ENCODE measurements at regions of chr12 and their contacts with region 1.

Region 1: DNA sequence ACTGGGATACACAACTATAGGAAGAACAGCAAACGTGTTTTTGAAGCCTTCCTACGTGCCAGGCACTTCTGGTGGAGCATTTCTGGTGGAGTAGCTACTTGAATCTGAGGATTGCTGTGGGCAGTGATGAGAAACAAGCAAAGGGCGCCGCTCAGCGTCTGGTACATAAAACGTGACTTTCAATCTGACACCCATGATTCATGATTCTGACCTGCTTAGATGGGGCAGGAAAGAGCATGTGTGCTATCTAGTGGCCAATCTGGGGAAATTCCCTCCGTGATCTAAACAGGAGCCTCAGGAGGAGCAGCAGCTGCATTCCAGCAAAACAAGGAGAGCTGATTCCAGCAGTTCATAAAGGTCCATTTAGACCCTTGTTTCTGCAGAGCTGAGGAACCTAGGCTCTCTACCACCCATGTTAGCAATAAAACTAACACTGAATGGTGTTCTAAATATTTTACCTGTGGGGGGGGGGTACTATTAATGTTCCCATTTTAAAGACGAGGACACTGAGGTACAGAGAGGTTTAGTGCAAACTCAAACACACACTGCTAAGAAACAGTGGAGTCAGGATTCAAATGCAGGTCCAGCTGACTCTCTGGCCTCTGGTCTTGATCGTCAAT is 37.8 kb downstream of the PAH start:
- DNase-seq: peak; percentile 75
- ATAC-seq: peak; percentile 73
- H3K4me3 ChIP-seq: no peak overlapping the region
- H3K27ac ChIP-seq: no peak overlapping the region
- H3K4me1 ChIP-seq: no peaks in the 10 kb centered on the region
- H3K27me3 ChIP-seq: peaks cover 14% of the 10 kb centered on the region; the same call in 1 of the 2 replicates
- CTCF ChIP-seq: peak; percentile 74

Region 2: DNA sequence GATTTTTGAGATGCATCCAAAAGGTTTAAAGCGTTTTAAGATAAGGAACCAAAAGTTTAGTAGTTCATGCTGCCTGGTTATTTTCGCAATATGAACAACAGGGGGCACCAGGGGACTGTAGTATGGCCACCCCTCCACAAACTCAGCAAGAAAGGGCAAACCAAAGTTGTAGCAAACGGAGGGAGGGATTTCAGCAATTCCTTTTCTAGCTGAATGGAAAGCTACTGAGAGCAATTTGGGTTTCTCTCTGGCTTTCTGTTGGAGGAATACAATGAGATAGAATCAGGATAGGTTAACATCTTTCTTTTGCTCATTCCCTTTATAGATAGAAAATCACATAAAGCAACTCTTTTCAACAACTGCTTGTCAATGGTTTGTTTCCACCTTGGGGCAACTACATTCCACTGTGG is 939.4 kb before region 1 on chr12:
- CTCF ChIA-PET with region 1: no interaction called
- POLR2A ChIA-PET with region 1: no interaction called
- intact Hi-C with region 1: loop called (anchors 2 kb)
- DNase-seq: peak; percentile 77
- ATAC-seq: peak; percentile 78
- H3K4me3 ChIP-seq: no peak overlapping the region
- H3K27ac ChIP-seq: no peak overlapping the region
- H3K4me1 ChIP-seq: no peaks in the 10 kb centered on the region
- H3K27me3 ChIP-seq: peaks cover 22% of the 10 kb centered on the region
- CTCF ChIP-seq: peak; percentile 93

Region 3: DNA sequence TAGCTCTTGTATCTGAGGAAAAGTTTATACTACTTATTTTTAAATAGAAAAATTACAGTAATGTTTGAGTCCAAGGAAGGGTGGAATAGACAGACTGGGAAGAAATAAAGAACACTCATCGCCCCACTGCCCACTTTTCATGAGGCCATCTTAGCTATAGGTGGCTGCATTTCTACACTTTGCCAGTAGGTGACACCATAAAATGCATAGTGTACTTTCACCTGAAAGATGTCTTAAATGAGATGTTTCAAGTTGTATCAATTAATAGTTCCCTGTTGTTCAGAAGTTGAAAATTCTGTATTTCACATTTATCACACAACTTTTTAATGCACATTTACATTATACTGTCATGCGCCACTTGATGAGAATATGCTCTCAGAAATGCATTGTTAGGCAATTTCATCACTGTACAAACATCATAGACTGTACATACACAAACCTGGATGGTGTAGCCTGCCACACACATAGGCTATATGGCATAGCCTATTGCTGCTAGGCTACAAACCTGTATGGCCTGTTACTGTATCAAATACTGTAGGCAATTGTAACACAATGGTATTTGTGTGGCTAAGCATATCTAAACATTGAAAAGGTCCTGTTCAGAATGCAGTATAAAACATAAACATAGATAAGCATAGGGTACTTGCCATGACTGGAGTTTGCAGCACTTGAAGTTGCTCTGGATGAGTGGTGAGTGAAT is 709.2 kb before region 1 on chr12:
- CTCF ChIA-PET with region 1: no interaction called
- POLR2A ChIA-PET with region 1: no interaction called
- intact Hi-C with region 1: no loop called
- DNase-seq: peak; percentile 60
- ATAC-seq: peak; percentile 48; the same call in 1 of the 2 replicates
- H3K4me3 ChIP-seq: no peak overlapping the region
- H3K27ac ChIP-seq: no peak overlapping the region
- H3K4me1 ChIP-seq: no peaks in the 10 kb centered on the region
- H3K27me3 ChIP-seq: no peaks in the 10 kb centered on the region
- CTCF ChIP-seq: peak; percentile 83

Region 4: DNA sequence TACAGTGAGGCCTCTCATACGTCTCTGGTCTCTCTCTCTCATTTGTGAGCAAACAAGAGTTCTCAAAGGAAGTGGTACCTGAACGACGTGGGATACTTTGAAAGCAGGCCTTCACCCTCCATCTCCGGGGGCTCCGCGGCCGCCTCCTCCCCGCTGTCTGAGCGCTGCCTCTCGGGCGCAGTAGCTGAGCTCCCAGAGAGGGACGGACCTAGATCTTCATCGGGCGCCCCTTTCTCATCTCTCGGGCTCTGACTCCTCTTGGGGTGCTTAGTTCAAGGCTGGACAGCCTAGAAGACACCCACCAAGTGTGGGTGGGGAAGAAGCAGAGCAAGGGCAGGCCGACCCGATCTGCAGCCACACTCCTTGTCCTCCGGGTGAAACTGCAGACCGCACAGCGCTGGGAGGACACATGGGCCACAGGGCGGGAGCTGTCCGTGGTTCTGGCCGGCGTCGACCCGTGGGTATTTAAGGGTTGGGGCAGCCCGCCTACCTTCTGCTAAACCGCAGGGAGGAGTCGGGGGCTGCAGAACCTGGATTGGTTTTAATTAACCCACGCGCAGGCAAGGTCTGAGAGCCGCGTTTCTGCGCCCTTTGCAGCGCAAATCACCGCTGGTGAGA is 54.9 kb before region 1 on chr12:
- CTCF ChIA-PET with region 1: no interaction called
- POLR2A ChIA-PET with region 1: no interaction called
- intact Hi-C with region 1: no loop called
- DNase-seq: peak; percentile 3
- ATAC-seq: no peak
- H3K4me3 ChIP-seq: no peak overlapping the region
- H3K27ac ChIP-seq: no peak overlapping the region
- H3K4me1 ChIP-seq: no peaks in the 10 kb centered on the region
- H3K27me3 ChIP-seq: peaks cover 17% of the 10 kb centered on the region
- CTCF ChIP-seq: no peak

Region 5: DNA sequence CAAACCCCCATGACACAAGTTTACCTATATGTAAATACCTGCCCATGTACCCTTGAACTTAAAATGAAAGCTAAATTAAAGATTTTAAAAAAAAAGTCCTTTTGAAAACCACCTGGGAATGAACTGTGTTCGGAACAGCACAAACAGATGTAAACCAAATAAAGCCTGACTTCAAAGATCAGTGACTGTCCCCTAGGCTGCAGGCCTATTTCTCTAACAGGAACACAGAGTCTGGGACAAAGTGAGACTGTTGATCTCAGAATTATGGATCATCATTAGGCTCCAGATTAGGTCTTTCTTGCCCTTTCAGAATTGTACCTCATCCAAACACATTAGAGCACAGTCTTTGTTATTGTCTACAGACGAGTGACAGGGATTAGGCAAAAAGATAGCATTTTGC is 16.8 kb before region 1 on chr12:
- CTCF ChIA-PET with region 1: no interaction called
- POLR2A ChIA-PET with region 1: no interaction called
- intact Hi-C with region 1: no loop called
- DNase-seq: no peak
- ATAC-seq: no peak
- H3K4me3 ChIP-seq: no peak overlapping the region
- H3K27ac ChIP-seq: no peak overlapping the region
- H3K4me1 ChIP-seq: no peaks in the 10 kb centered on the region
- H3K27me3 ChIP-seq: no peaks in the 10 kb centered on the region
- CTCF ChIP-seq: no peak

Measured in PC-3 (cell line).